PC-9 (cell line): ENCODE measurements at regions of chr4 and their contacts with region 1.

Region 1: DNA sequence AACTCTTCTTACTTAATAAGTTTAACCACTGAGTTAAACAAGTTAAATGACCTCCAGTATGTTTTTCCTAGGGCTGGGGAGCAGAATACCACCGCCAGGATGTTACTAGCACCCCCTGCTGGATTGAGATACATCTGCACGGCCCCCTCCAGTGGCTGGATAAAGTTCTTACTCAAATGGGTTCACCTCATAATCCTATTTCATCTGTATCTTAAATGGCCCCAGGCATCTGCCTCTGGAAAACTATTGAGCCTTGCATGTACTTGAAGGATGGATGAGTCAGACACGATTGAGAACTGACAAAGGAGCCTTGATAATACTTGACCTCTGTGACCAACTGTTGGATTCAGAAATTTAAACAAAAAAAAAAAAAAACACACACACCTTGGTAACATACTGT is 61.5 kb upstream of the MMAA start:
- DNase-seq: peak; percentile 31 to 45
- H3K4me3 ChIP-seq: no peak overlapping the region
- H3K27ac ChIP-seq: no peak overlapping the region
- H3K4me1 ChIP-seq: peaks cover 15% of the 10 kb centered on the region
- H3K27me3 ChIP-seq: no peaks in the 10 kb centered on the region
- CTCF ChIP-seq: peak; percentile 62

Region 2: GRCh38 chr4:145234091-145234706 is 323.5 kb before region 1 on chr4:
- CTCF ChIA-PET with region 1: interaction called, 4 read pairs
- POLR2A ChIA-PET with region 1: no interaction called
- intact Hi-C with region 1: loop called (anchors 1 kb)
- DNase-seq: peak; percentile 45 to 53
- H3K4me3 ChIP-seq: no peak overlapping the region
- H3K27ac ChIP-seq: no peak overlapping the region
- H3K4me1 ChIP-seq: no peaks in the 10 kb centered on the region
- H3K27me3 ChIP-seq: no peaks in the 10 kb centered on the region
- CTCF ChIP-seq: peak; percentile 81

Region 3: GRCh38 chr4:145324161-145324560 is 233.6 kb before region 1 on chr4:
- CTCF ChIA-PET with region 1: no interaction called
- POLR2A ChIA-PET with region 1: no interaction called
- intact Hi-C with region 1: no loop called
- DNase-seq: peak in 1 of 2 experiments; percentile 61
- H3K4me3 ChIP-seq: no peak overlapping the region
- H3K27ac ChIP-seq: no peak overlapping the region
- H3K4me1 ChIP-seq: no peaks in the 10 kb centered on the region
- H3K27me3 ChIP-seq: no peaks in the 10 kb centered on the region
- CTCF ChIP-seq: no peak

Region 4: DNA sequence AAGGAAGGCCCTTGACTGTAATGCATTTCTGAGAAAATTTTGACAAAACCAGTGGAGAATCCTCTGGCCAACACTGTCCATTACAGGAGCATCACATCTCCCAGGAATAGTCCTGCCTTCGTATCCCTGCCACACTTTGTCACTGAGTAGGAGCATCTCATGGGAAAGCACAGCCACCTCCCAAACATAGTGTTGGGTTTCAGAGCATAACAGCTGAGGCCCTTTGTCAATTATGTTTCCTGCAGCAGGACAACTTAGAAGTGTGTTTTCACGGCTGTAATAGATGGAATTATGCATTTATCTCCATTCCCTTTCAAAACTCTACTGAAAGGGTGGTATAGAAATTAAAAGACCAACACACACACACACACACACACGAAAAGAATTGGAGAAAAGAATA is 167.1 kb before region 1 on chr4:
- CTCF ChIA-PET with region 1: no interaction called
- POLR2A ChIA-PET with region 1: no interaction called
- intact Hi-C with region 1: no loop called
- DNase-seq: no peak
- H3K4me3 ChIP-seq: no peak overlapping the region
- H3K27ac ChIP-seq: no peak overlapping the region
- H3K4me1 ChIP-seq: no peaks in the 10 kb centered on the region
- H3K27me3 ChIP-seq: no peaks in the 10 kb centered on the region
- CTCF ChIP-seq: no peak

Region 5: GRCh38 chr4:145694929-145695328 is 137.2 kb after region 1 on chr4:
- CTCF ChIA-PET with region 1: no interaction called
- POLR2A ChIA-PET with region 1: no interaction called
- intact Hi-C with region 1: no loop called
- DNase-seq: no peak
- H3K4me3 ChIP-seq: no peak overlapping the region
- H3K27ac ChIP-seq: no peak overlapping the region
- H3K4me1 ChIP-seq: no peaks in the 10 kb centered on the region
- H3K27me3 ChIP-seq: no peaks in the 10 kb centered on the region
- CTCF ChIP-seq: no peak